SK-N-SH (cell line): ENCODE measurements at regions of chr3 and their contacts with region 1.

Region 1: DNA sequence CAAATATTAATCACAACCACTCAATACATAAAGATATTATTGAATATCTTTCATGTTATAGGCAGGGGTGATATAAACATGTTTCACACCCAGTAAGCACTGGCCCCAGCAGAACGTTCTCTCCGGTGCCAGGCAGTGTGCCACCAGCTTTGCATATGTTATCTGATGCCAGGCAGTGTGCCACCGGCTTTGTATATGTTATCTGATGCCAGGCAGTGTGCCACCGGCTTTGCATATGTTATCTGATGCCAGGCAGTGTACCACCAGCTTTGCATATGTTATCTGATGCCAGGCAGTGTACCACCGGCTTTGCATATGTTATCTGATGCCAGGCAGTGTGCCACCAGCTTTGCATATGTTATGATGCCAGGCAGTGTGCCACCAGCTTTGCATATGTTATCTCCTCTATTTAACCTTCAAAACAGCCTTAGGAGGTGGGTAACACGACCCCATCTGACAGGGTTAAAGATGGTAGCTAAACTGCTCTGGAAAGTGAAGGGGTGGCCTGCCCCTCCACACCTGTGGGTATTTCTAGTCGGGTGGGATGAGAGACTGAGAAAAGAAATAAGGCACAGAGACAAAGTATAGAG is 6.9 kb downstream of the MUC20 start:
- DNase-seq: no peak
- H3K4me3 ChIP-seq: no peak overlapping the region
- H3K27ac ChIP-seq: no peak overlapping the region; a peak in 1 of 4 replicates
- H3K4me1 ChIP-seq: peaks cover 0 to 14% of the 10 kb centered on the region in 2 experiments; a peak in 1 of 4 replicates
- H3K27me3 ChIP-seq: no peaks in the 10 kb centered on the region; the same call in 1 of the 2 replicates
- CTCF ChIP-seq: no peak
- EP300 ChIP-seq: peak in 1 of 2 experiments; percentile 56; a peak in 1 of 4 replicates
- RAD21 ChIP-seq: no peak

Region 2: GRCh38 chr3:195296662-195297061 is 431.0 kb before region 1 on chr3:
- CTCF ChIA-PET with region 1: no interaction called
- POLR2A ChIA-PET with region 1: no interaction called
- DNase-seq: no peak
- H3K4me3 ChIP-seq: no peak overlapping the region
- H3K27ac ChIP-seq: no peak overlapping the region
- H3K4me1 ChIP-seq: no peaks in the 10 kb centered on the region
- H3K27me3 ChIP-seq: no peaks in the 10 kb centered on the region
- CTCF ChIP-seq: no peak
- EP300 ChIP-seq: no peak
- RAD21 ChIP-seq: no peak

Region 3: GRCh38 chr3:195748661-195749060 is 21.0 kb after region 1 on chr3:
- CTCF ChIA-PET with region 1: interaction called, 10 read pairs
- POLR2A ChIA-PET with region 1: no interaction called
- DNase-seq: peak; percentile 38
- H3K4me3 ChIP-seq: no peak overlapping the region
- H3K27ac ChIP-seq: no peak overlapping the region
- H3K4me1 ChIP-seq: peaks cover 0 to 3% of the 10 kb centered on the region in 2 experiments; a peak in 1 of 4 replicates
- H3K27me3 ChIP-seq: peaks cover 5% of the 10 kb centered on the region; the same call in 1 of the 2 replicates
- CTCF ChIP-seq: no peak
- EP300 ChIP-seq: no peak
- RAD21 ChIP-seq: no peak

Region 4: DNA sequence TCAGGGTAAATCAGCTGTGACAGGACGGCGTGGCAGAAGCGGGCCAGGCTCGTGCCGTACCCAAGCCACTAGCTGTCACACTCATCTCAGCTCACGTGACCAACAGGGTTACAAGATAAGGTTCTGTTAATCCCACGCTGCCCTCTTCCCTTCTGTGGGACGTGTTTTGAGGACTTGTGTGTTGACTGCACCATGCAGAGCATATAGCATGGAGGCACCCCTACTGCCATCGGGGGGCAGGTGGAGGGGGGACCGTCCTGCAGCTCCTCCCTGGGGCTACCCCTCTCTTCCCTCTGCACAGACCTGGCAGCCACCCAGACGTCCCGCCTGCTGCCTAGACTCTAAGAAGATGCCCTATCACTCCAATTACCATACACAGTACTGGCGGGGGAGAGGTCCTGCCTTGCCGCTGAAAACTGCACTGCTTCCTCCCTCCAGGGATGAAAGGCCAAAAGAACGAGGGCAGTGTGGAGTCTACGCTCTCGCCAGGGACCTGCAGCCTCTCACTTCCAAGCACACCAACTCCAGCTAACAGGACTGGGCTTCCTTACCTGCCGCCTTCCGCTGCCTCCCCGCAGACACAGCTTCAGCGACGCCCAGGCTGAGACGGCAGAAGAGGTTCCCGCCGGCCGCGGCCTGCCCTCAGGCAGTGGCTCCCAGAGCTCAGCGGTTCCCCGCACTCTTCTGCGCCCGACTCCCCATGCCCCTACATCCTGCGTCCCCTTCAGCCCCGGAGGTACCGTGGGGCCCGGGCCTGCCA is 180.4 kb after region 1 on chr3 and contains the start of gene TNK2:
- CTCF ChIA-PET with region 1: no interaction called
- POLR2A ChIA-PET with region 1: no interaction called
- DNase-seq: peak; percentile 69
- H3K4me3 ChIP-seq: peak within 1 kb of the TSS; percentile 65 to 72
- H3K27ac ChIP-seq: peak within 1 kb of the TSS in 1 of 2 experiments; percentile 56; a peak in 2 of 4 replicates
- H3K4me1 ChIP-seq: peaks cover 9 to 28% of the 10 kb centered on the region in 2 experiments; a peak in 2 of 4 replicates
- H3K27me3 ChIP-seq: no peaks in the 10 kb centered on the region
- CTCF ChIP-seq: no peak
- EP300 ChIP-seq: no peak
- RAD21 ChIP-seq: no peak
- polyA plus RNA-seq, gene TNK2: 11.3 and 17.3 TPM in 2 replicates